CD4-positive, alpha-beta memory T cell (primary cell): ENCODE measurements at regions of chr6 and their contacts with region 1.

Region 1: DNA sequence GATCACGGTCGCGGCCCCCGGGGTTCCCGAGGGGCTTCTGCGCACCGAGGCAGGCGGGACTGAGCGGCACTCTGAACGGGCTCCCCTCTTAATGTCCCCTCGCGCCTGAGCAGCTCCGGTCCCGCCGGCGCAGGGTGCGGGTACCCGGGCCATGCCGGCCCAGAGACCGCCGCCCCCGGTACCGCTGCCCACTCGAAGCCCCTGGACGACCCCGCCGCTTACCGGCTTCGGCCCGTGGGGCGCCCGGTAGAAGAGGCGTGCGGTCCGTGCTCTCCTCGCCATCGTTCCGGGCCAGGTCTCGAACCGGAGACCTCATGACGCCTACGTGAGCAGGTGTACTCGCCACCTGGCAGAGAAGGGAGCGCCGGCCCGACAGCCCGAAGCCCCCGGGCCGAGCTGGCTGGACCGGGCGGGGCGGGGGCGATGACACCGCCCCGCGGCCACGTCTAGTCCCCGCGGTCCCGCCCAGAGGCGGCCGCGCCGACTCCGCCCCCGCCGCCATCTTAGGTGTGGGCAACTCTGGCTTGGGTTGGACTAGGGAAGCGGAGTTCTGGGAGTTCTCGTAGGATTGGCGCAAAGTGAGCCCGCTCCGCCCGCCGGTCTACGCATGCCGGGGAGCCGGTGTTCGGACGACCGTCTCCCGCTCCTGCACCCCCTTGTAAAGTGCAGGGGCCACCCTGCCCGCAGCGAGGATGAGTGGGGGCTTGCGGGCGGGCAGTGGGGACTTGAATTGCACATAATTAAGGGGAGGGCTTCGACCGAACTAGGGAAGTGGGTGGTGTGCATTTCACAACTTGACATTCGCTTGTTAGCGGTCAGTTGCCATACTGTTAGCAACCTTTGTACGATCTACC is at the start of gene SLC17A5:
- DNase-seq: peak; percentile 80 to 91 (median 86)
- H3K4me3 ChIP-seq: peak within 1 kb of the TSS; percentile 85 to 95
- H3K4me3 Mint-ChIP-seq: peak within 1 kb of the TSS; percentile 99 to 100 (median 99)
- H3K27ac ChIP-seq: peak within 1 kb of the TSS; percentile 99
- H3K27ac Mint-ChIP-seq: peak within 1 kb of the TSS; percentile 95 to 99 (median 99)
- H3K4me1 ChIP-seq: peaks cover 22% of the 10 kb centered on the region
- H3K4me1 Mint-ChIP-seq: peaks cover 13 to 40% (median 34%) of the 10 kb centered on the region in 4 donors
- H3K27me3 ChIP-seq: no peaks in the 10 kb centered on the region
- H3K27me3 Mint-ChIP-seq: no peaks in the 10 kb centered on the region
- total RNA-seq, gene SLC17A5: 16.1 to 16.2 TPM

Region 2: GRCh38 chr6:73451223-73452107 is 202.3 kb before region 1 on chr6:
- CTCF ChIA-PET with region 1: interaction called, 5 read pairs
- POLR2A ChIA-PET with region 1: interaction called, 10 read pairs
- intact Hi-C with region 1: no loop called
- DNase-seq: peak; percentile 41 to 64 (median 49)
- H3K4me3 ChIP-seq: peak overlapping the region; percentile 97 to 98
- H3K4me3 Mint-ChIP-seq: peak overlapping the region; percentile 90 to 99 (median 97)
- H3K27ac ChIP-seq: peak overlapping the region; percentile 92
- H3K27ac Mint-ChIP-seq: peak overlapping the region; percentile 88 to 97 (median 92)
- H3K4me1 ChIP-seq: peaks cover 32% of the 10 kb centered on the region
- H3K4me1 Mint-ChIP-seq: peaks cover 14 to 44% (median 24%) of the 10 kb centered on the region in 4 donors
- H3K27me3 ChIP-seq: no peaks in the 10 kb centered on the region
- H3K27me3 Mint-ChIP-seq: no peaks in the 10 kb centered on the region

Region 3: DNA sequence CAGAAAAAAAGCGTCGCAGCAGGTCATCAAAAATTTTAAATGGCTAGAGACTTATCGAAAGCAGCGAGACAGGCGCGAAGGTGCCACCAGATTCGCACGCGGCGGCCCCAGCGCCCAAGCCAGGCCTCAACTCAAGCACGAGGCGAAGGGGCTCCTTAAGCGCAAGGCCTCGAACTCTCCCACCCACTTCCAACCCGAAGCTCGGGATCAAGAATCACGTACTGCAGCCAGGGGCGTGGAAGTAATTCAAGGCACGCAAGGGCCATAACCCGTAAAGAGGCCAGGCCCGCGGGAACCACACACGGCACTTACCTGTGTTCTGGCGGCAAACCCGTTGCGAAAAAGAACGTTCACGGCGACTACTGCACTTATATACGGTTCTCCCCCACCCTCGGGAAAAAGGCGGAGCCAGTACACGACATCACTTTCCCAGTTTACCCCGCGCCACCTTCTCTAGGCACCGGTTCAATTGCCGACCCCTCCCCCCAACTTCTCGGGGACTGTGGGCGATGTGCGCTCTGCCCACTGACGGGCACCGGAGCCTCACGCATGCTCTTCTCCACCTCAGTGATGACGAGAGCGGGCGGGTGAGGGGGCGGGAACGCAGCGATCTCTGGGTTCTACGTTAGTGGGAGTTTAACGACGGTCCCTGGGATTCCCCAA is 133.0 kb before region 1 on chr6 and contains the start of gene EEF1A1:
- CTCF ChIA-PET with region 1: interaction called, 33 read pairs
- POLR2A ChIA-PET with region 1: interaction called, 238 read pairs
- intact Hi-C with region 1: loop called (anchors 1 kb)
- DNase-seq: peak; percentile 98 to 100 (median 99)
- H3K4me3 ChIP-seq: peak within 1 kb of the TSS; percentile 68 to 93
- H3K4me3 Mint-ChIP-seq: peak within 1 kb of the TSS; percentile 95 to 98 (median 96)
- H3K27ac ChIP-seq: peak within 1 kb of the TSS; percentile 100
- H3K27ac Mint-ChIP-seq: peak within 1 kb of the TSS; percentile 98 to 99 (median 98)
- H3K4me1 ChIP-seq: peaks cover 60% of the 10 kb centered on the region
- H3K4me1 Mint-ChIP-seq: peaks cover 39 to 81% (median 54%) of the 10 kb centered on the region in 4 donors
- H3K27me3 ChIP-seq: no peaks in the 10 kb centered on the region
- H3K27me3 Mint-ChIP-seq: no peaks in the 10 kb centered on the region
- total RNA-seq, gene EEF1A1: 15,632 to 16,691 TPM

Region 4: DNA sequence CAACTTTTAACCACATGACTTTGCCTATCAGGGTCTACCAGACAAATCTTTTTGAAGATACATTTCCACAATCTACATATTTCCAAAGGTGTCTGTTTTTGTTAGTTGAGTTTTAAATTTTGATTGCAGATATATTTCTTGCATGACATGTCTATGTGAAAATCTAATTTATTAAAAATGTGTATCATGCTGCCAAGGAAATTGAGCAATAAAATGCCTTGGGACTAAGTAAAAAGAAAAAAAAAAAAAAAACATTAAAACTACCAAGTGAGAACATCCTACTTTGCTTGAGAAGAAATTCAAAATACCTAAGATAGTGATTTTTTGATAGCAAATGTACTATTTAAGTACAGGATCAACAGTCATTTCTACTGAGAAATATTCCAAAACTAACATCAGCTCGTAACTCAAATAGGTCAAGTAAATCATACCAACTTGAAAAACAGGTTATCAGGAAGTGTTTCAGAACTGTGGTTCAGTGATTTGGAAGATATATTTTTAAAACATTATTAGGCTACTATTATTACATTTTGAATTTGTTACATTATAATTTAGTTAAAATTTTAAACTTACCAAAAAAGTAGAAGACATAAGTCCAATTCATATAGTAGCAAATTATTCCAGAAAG is 17.6 kb before region 1 on chr6:
- CTCF ChIA-PET with region 1: interaction called, 10 read pairs
- POLR2A ChIA-PET with region 1: interaction called, 4 read pairs
- intact Hi-C with region 1: no loop called
- DNase-seq: no peak
- H3K4me3 ChIP-seq: no peak overlapping the region
- H3K4me3 Mint-ChIP-seq: no peak overlapping the region
- H3K27ac ChIP-seq: no peak overlapping the region
- H3K27ac Mint-ChIP-seq: no peak overlapping the region
- H3K4me1 ChIP-seq: no peaks in the 10 kb centered on the region
- H3K4me1 Mint-ChIP-seq: peaks cover 0 to 5% (median 3%) of the 10 kb centered on the region in 4 donors
- H3K27me3 ChIP-seq: no peaks in the 10 kb centered on the region
- H3K27me3 Mint-ChIP-seq: no peaks in the 10 kb centered on the region

Region 5: GRCh38 chr6:75284632-75285286 is 1631.0 kb after region 1 on chr6 and contains the start of gene TMEM30A:
- CTCF ChIA-PET with region 1: interaction called, 3 read pairs
- POLR2A ChIA-PET with region 1: interaction called, 9 read pairs
- intact Hi-C with region 1: loop called (anchors 2 kb)
- DNase-seq: peak; percentile 93 to 98 (median 97)
- H3K4me3 ChIP-seq: peak within 1 kb of the TSS; percentile 70 to 86
- H3K4me3 Mint-ChIP-seq: no peak within 1 kb of the TSS
- H3K27ac ChIP-seq: peak within 1 kb of the TSS; percentile 79
- H3K27ac Mint-ChIP-seq: no peak within 1 kb of the TSS
- H3K4me1 ChIP-seq: peaks cover 63% of the 10 kb centered on the region
- H3K4me1 Mint-ChIP-seq: peaks cover 23 to 39% (median 35%) of the 10 kb centered on the region in 4 donors
- H3K27me3 ChIP-seq: no peaks in the 10 kb centered on the region
- H3K27me3 Mint-ChIP-seq: no peaks in the 10 kb centered on the region
- total RNA-seq, gene TMEM30A: 73.6 to 78.3 TPM